CD8-positive, alpha-beta T cell (primary cell): ENCODE measurements at regions of chr15 and their contacts with region 1.

Region 1: GRCh38 chr15:63093486-63094205 is 28.0 kb upstream of the LACTB start:
- DNase-seq: peak; percentile 40 to 82 (median 69)
- ATAC-seq: peak; percentile 87
- H3K4me3 ChIP-seq: no peak overlapping the region
- H3K4me3 Mint-ChIP-seq: no peak overlapping the region
- H3K27ac ChIP-seq: no peak overlapping the region
- H3K27ac Mint-ChIP-seq: no peak overlapping the region
- H3K4me1 ChIP-seq: no peaks in the 10 kb centered on the region
- H3K4me1 Mint-ChIP-seq: peaks cover 2% of the 10 kb centered on the region
- H3K27me3 ChIP-seq: peaks cover 0 to 4% of the 10 kb centered on the region in 2 experiments
- H3K27me3 Mint-ChIP-seq: no peaks in the 10 kb centered on the region
- CTCF ChIP-seq: peak; percentile 71

Region 2: DNA sequence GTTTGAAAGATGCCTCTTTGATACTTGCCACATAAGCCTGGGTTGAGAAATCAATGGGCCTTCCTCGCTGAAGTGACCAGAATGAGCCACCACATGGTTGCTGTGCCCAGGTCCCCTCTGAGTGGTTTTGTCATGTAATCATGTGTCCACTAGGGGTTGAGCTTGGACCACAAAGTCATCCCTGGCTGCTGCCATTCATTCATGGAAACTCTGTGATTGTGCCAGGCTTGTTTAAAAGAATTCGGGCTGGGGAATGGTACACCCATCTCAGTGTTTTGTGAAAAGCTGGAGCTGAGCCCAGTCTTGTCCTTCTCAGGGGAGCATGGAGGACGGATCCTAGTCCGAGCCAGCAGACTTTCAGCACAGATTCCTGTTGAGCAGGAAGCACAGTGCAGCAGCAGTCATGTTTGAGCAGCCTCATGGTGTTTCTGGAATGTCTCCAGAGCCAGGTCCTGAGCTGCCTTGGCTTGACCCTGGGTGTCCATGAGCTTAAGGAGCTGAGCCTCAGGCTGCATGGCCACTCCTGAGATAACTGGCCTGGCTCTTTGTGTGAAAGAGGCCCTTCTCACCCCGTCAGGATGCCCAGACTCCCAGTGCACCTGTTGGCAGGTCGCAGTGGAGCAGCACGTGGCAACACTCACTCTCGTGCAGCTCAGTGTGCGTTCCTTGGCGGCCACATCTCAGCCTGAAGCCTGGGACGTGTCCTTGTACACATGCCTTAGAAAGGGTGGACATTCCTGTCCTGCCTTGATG is 311.4 kb before region 1 on chr15:
- CTCF ChIA-PET with region 1: no interaction called
- POLR2A ChIA-PET with region 1: no interaction called
- intact Hi-C with region 1: loop called (anchors 2 to 5 kb)
- DNase-seq: peak in 2 of 9 experiments; percentile 22 to 28
- ATAC-seq: no peak
- H3K4me3 ChIP-seq: no peak overlapping the region
- H3K4me3 Mint-ChIP-seq: no peak overlapping the region
- H3K27ac ChIP-seq: no peak overlapping the region
- H3K27ac Mint-ChIP-seq: no peak overlapping the region
- H3K4me1 ChIP-seq: no peaks in the 10 kb centered on the region
- H3K4me1 Mint-ChIP-seq: no peaks in the 10 kb centered on the region
- H3K27me3 ChIP-seq: no peaks in the 10 kb centered on the region
- H3K27me3 Mint-ChIP-seq: peaks cover 6% of the 10 kb centered on the region
- CTCF ChIP-seq: no peak

Region 3: GRCh38 chr15:62847900-62848489 is 245.7 kb before region 1 on chr15:
- CTCF ChIA-PET with region 1: interaction called, 5 read pairs
- POLR2A ChIA-PET with region 1: no interaction called
- intact Hi-C with region 1: loop called in 1 of 2 experiments (anchors 2 kb)
- DNase-seq: peak in 5 of 9 experiments; percentile 10 to 56 (median 32)
- ATAC-seq: no peak
- H3K4me3 ChIP-seq: no peak overlapping the region
- H3K4me3 Mint-ChIP-seq: no peak overlapping the region
- H3K27ac ChIP-seq: no peak overlapping the region
- H3K27ac Mint-ChIP-seq: no peak overlapping the region
- H3K4me1 ChIP-seq: no peaks in the 10 kb centered on the region
- H3K4me1 Mint-ChIP-seq: no peaks in the 10 kb centered on the region
- H3K27me3 ChIP-seq: no peaks in the 10 kb centered on the region
- H3K27me3 Mint-ChIP-seq: peaks cover 9% of the 10 kb centered on the region
- CTCF ChIP-seq: peak; percentile 12

Region 4: DNA sequence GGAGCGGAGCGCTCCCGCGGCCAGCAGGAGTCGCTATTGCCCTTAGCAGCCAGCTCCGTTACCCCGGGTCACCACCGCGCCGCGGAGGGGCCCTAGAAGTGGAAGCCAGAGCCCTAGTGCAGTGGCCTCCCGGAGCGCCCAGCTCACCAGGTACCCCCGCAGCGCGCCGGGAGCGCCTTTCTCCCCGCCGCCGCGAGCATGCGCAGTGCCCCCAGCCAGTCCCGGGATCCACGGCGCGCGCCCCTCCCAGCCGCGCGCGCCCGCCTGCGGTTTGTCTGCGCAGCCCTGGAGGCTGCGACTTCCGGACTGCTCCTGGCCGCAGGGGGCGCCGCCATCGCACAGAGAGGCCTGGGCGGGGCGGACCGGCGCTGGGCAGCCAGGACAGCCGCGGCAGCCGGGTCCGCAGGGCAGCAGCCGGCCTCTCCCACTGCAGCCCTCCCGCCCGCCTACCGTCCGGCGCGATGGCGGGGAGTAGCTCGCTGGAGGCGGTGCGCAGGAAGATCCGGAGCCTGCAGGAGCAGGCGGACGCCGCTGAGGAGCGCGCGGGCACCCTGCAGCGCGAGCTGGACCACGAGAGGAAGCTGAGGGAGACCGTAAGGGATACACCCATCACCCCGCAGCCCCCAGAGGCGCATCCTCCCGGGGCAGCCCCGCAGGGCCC is 45.4 kb before region 1 on chr15:
- CTCF ChIA-PET with region 1: interaction called, 162 read pairs
- POLR2A ChIA-PET with region 1: interaction called, 7 read pairs
- intact Hi-C with region 1: loop called (anchors 1 kb)
- DNase-seq: peak; percentile 65 to 92 (median 85)
- ATAC-seq: peak; percentile 77
- H3K4me3 ChIP-seq: peak overlapping the region; percentile 62 to 72
- H3K4me3 Mint-ChIP-seq: peak overlapping the region; percentile 88
- H3K27ac ChIP-seq: peak overlapping the region in 1 of 2 experiments; percentile 47
- H3K27ac Mint-ChIP-seq: peak overlapping the region; percentile 74
- H3K4me1 ChIP-seq: peaks cover 21% of the 10 kb centered on the region
- H3K4me1 Mint-ChIP-seq: peaks cover 21% of the 10 kb centered on the region
- H3K27me3 ChIP-seq: peaks cover 14 to 25% of the 10 kb centered on the region in 2 experiments
- H3K27me3 Mint-ChIP-seq: peaks cover 32% of the 10 kb centered on the region
- CTCF ChIP-seq: peak; percentile 80

Region 5: DNA sequence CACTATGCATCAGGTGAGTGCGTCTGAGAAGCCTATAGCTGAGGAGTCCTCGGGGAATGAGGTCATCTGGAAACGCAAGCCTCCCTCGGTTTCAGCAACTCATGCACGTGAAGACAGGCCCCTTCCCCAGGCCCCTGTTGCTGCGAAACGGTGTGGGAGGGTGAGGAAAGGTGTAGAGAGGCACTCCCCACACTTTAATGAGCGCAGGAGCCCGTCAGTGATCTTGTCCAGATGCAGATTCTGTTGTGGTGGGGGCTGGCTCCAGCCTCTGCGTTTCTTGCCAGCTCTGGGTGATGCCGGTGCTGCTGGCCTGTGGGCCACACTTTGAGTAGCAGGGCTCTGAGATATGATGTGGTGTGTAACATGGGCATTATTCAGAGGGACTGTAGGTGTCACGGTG is 10.6 kb before region 1 on chr15:
- CTCF ChIA-PET with region 1: interaction called, 13 read pairs
- POLR2A ChIA-PET with region 1: no interaction called
- intact Hi-C with region 1: no loop called
- DNase-seq: no peak
- ATAC-seq: no peak
- H3K4me3 ChIP-seq: no peak overlapping the region
- H3K4me3 Mint-ChIP-seq: no peak overlapping the region
- H3K27ac ChIP-seq: no peak overlapping the region
- H3K27ac Mint-ChIP-seq: no peak overlapping the region
- H3K4me1 ChIP-seq: no peaks in the 10 kb centered on the region
- H3K4me1 Mint-ChIP-seq: no peaks in the 10 kb centered on the region
- H3K27me3 ChIP-seq: no peaks in the 10 kb centered on the region
- H3K27me3 Mint-ChIP-seq: peaks cover 9% of the 10 kb centered on the region
- CTCF ChIP-seq: no peak

Region 6: DNA sequence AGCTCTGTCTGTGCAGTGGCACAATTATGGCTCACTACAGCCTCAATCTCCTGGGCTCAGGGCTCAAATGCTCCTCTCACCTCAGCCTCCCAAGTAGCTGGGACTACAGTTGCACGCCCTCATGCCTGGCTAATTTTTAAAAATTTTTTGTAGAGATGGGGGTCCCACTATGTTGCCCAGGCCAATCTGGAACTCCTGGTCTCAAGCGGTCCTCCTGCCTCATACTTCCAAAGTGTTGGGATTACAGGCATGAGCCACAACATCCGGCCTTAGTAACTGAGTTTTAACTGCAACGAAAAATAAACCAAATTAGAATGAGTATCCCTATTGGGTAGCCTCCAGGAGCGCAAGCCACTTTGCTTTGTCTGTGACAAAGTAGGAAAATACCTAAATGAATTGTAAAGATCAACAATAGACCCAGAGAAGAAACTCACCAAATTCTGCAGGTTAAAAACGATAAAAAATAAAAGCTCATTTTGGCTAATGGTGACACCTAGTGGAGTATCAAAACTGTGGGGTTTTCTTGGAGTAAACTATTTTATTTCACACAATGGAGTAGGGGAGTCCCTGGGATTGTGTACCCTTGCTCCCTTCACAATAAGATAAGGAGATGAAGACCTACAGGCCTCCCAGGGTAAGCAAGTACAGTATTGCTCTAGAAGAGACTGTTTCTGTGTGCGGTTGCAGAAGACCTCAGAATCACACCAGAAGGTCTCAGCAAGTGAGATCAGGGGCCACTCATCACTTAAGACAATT is 309.0 kb after region 1 on chr15:
- CTCF ChIA-PET with region 1: interaction called, 5 read pairs
- POLR2A ChIA-PET with region 1: no interaction called
- intact Hi-C with region 1: loop called in 1 of 2 experiments (anchors 2 kb)
- DNase-seq: peak in 2 of 9 experiments; percentile 46 to 63
- ATAC-seq: peak; percentile 65
- H3K4me3 ChIP-seq: no peak overlapping the region
- H3K4me3 Mint-ChIP-seq: no peak overlapping the region
- H3K27ac ChIP-seq: no peak overlapping the region
- H3K27ac Mint-ChIP-seq: no peak overlapping the region
- H3K4me1 ChIP-seq: no peaks in the 10 kb centered on the region
- H3K4me1 Mint-ChIP-seq: peaks cover 5% of the 10 kb centered on the region
- H3K27me3 ChIP-seq: no peaks in the 10 kb centered on the region
- H3K27me3 Mint-ChIP-seq: peaks cover 11% of the 10 kb centered on the region
- CTCF ChIP-seq: peak; percentile 72